AG04450 (cell line): ENCODE measurements at regions of chr15 and their contacts with region 1.

Region 1: DNA sequence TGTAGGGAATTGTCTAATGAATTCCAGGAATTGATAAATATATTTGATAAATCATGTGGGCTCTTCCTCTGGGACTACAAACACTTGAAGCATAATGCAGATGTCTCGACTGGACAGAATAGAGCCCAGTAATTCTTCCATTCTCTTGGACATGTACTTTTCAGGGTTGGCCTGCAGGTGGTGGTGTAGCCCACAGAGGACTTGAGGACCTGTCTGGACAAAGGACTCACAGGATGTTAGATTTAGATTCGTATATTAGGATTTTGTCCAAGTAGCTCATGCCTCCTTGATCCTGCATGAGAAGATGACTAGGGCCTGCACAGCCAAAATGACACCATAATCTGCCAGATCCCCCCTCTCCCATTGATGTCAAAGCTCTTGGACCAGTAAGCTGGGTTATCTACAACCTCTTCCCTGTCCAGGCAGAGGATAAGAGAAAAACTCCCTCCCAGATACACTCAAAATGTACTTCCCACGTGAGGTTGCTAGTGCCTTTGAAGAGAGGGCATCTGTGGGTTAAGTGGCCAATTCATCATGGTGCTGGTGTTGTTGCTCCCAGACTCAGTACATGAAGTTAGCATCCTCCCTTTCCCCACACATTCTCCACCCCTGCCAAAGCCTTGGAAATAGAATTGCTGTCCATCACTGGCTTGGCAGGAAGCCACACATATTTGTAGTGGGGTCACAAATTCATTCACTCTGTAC is 88.6 kb upstream of the ZNF280D start:
- DNase-seq: peak; percentile 36
- H3K4me3 ChIP-seq: no peak overlapping the region
- H3K27ac ChIP-seq: no peak overlapping the region
- H3K27me3 ChIP-seq: no peaks in the 10 kb centered on the region
- CTCF ChIP-seq: peak; percentile 79

Region 2: GRCh38 chr15:56683908-56684307 is 138.0 kb before region 1 on chr15:
- CTCF ChIA-PET with region 1: no interaction called
- POLR2A ChIA-PET with region 1: no interaction called
- DNase-seq: no peak
- H3K4me3 ChIP-seq: no peak overlapping the region
- H3K27ac ChIP-seq: no peak overlapping the region
- H3K27me3 ChIP-seq: no peaks in the 10 kb centered on the region
- CTCF ChIP-seq: no peak

Region 3: DNA sequence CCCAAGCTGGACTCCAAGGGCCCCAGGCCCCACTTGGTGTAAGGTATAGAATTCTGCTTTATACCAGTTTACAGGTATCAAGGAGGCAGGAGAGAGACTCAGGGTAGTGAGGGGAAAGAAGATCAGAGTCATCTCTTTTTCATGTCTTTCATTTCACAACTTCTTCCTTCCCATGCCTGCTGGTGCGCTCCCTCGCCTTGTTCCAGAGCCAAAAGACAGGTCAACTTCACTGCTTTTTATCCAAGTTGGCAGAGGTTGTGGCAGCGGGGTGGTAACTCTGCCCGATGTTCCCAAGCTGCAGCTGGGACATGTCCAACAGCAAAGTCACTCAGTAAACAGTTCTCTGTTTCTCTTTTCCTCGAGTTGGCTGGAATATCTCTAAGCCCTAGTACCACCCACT is 10.3 kb after region 1 on chr15:
- CTCF ChIA-PET with region 1: interaction called, 15 read pairs
- POLR2A ChIA-PET with region 1: no interaction called
- DNase-seq: no peak
- H3K4me3 ChIP-seq: no peak overlapping the region
- H3K27ac ChIP-seq: no peak overlapping the region
- H3K27me3 ChIP-seq: no peaks in the 10 kb centered on the region
- CTCF ChIP-seq: no peak

Region 4: GRCh38 chr15:56869573-56869972 is 47.7 kb after region 1 on chr15:
- CTCF ChIA-PET with region 1: interaction called, 13 read pairs
- POLR2A ChIA-PET with region 1: interaction called, 3 read pairs
- DNase-seq: no peak
- H3K4me3 ChIP-seq: no peak overlapping the region
- H3K27ac ChIP-seq: no peak overlapping the region
- H3K27me3 ChIP-seq: no peaks in the 10 kb centered on the region
- CTCF ChIP-seq: peak; percentile 43

Region 5: GRCh38 chr15:57138349-57138788 is 316.5 kb after region 1 on chr15:
- CTCF ChIA-PET with region 1: interaction called, 25 read pairs
- POLR2A ChIA-PET with region 1: no interaction called
- DNase-seq: no peak
- H3K4me3 ChIP-seq: no peak overlapping the region
- H3K27ac ChIP-seq: no peak overlapping the region
- H3K27me3 ChIP-seq: no peaks in the 10 kb centered on the region
- CTCF ChIP-seq: peak; percentile 93

Region 6: DNA sequence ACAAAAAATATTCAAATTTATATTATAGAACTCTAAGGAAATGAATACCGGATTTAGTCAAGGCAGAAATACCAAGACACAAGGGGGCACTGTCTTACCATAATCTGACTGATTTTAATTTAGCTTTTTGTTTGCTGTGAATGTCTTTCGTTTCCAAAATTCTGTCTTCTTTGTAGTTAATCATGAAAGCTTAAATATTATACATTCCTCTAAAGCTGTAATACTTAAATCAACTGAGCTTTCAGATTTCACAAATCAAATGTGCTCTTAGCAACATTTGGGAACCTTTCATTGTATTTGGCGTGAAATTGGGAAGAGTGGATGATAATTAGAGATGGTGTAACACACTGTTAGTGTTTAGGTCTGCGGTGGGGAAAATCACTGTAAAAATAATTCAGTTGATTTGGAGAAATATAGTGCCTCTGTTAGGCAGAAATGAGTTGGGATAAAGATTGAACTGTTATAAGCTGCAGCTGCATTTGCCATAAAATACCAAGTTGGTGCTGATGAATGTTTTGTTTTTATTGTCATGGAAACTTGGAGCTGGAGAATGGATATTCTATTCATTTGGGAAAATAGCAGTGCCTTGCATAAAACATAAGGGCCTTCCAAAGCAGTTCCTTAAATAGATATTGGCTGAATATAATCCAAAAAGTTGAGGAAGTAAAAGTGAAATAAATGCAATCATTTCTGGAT is 324.8 kb after region 1 on chr15:
- CTCF ChIA-PET with region 1: interaction called, 26 read pairs
- POLR2A ChIA-PET with region 1: no interaction called
- DNase-seq: no peak
- H3K4me3 ChIP-seq: peak overlapping the region; percentile 26
- H3K27ac ChIP-seq: no peak overlapping the region
- H3K27me3 ChIP-seq: no peaks in the 10 kb centered on the region
- CTCF ChIP-seq: peak; percentile 70

Region 7: GRCh38 chr15:57213862-57214261 is 392.0 kb after region 1 on chr15:
- CTCF ChIA-PET with region 1: interaction called, 12 read pairs
- POLR2A ChIA-PET with region 1: no interaction called
- DNase-seq: no peak
- H3K4me3 ChIP-seq: no peak overlapping the region
- H3K27ac ChIP-seq: no peak overlapping the region
- H3K27me3 ChIP-seq: no peaks in the 10 kb centered on the region
- CTCF ChIP-seq: peak; percentile 56

Region 8: GRCh38 chr15:57527382-57528091 is 705.7 kb after region 1 on chr15:
- CTCF ChIA-PET with region 1: interaction called, 13 read pairs
- POLR2A ChIA-PET with region 1: no interaction called
- DNase-seq: peak; percentile 78
- H3K4me3 ChIP-seq: no peak overlapping the region
- H3K27ac ChIP-seq: no peak overlapping the region
- H3K27me3 ChIP-seq: peaks cover 9% of the 10 kb centered on the region
- CTCF ChIP-seq: peak; percentile 65